OCI-LY7 (cell line): ENCODE measurements at regions of chr1 and their contacts with region 1.

Region 1: GRCh38 chr1:225428068-225428880 is 436 bp upstream of the LBR start:
- DNase-seq: peak; percentile 95
- H3K4me3 ChIP-seq: peak overlapping the region; percentile 85
- H3K27ac ChIP-seq: peak overlapping the region; percentile 92
- H3K4me1 ChIP-seq: peaks cover 33% of the 10 kb centered on the region
- CTCF ChIP-seq: no peak

Region 2: DNA sequence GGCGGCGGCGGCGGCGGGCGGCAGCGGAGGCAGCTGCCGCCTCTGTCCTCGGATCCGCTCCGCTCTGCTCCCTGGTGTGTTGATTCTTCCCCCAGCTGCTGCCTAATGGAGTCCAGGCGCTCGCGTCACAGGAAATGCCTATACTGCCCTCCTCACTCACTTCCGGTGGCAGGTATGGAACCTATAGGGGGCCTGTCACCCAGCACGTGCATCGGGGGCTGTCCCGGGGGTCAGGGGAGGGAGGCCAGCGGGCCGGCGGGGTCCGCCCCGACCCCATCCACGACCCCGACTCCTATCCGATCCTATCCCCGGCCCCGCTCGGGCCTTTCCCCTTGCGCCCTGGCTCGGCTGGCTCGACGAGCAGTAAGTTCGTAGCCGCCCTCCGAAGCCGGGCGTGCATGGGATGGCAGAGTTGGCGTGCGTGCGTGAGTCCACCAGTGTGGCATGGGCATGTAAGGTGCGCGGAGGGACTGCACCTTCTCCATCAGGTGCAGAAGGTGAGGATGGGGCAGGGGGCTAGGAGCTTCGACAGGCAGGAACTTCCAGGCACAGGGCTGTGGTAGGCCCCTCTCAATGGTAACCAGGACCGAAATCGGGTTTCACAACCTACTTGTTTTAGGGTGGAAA is 993.5 kb before region 1 on chr1 and contains the start of gene WDR26:
- CTCF ChIA-PET with region 1: no interaction called
- POLR2A ChIA-PET with region 1: no interaction called
- intact Hi-C with region 1: loop called (anchors 10 kb)
- DNase-seq: peak; percentile 93
- H3K4me3 ChIP-seq: peak within 1 kb of the TSS; percentile 75
- H3K27ac ChIP-seq: peak within 1 kb of the TSS; percentile 44
- H3K4me1 ChIP-seq: peaks cover 51% of the 10 kb centered on the region
- CTCF ChIP-seq: no peak; the same call in 1 of the 2 replicates
- total RNA-seq, gene WDR26: 31.3 and 32.0 TPM in 2 replicates

Region 3: DNA sequence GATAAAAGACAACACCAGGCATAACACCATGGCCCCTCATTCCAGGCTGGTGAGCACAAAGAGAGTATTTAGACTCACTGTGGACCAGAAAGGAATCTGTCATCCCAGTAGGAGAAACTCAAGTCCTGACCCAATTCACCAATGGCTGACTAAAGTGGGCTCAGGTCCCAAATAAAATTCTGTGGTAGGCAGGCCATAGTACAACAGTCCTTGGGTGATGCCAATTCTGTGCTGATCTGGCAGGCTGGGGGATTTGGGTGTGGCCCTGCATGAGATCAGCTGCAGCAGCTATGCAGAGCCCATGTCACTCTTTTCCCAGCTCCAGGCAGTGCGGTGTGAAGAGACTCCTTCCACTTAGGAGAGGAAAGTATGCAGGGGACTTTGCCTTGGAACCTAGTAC is 245.6 kb before region 1 on chr1:
- CTCF ChIA-PET with region 1: no interaction called
- POLR2A ChIA-PET with region 1: no interaction called
- intact Hi-C with region 1: no loop called
- DNase-seq: no peak
- H3K4me3 ChIP-seq: no peak overlapping the region
- H3K27ac ChIP-seq: no peak overlapping the region
- H3K4me1 ChIP-seq: no peaks in the 10 kb centered on the region
- CTCF ChIP-seq: no peak

Region 4: DNA sequence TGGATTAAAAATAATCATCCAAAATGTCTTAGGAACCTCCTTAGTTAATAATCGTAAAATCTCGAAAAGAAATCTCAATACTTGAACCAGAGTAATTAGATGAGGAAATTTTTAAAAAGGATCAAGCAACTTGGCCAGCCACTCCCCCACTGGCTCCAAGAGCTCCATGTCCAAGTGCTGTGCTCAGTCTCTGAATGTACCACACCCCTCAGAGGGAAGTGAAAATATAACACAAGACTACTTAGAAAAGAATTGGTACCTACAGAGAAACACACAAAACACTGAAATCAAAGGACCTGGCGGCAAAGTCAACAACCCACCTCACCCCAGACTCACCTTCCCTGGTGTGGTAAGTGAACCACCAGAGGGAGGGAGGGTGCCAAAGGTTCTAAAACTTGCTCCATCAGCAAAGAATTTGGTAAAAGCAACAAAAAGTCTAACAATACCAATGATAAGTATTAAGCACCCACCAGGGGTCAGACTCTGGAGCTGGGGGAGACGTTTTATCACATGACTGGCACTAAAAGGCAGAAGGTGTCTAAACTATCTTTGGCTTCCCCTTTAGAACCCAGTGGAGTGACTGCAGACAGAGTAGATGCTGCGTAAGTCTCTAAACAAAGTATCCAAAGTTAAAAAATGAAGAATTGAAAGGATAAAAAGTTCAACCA is 14.4 kb before region 1 on chr1:
- CTCF ChIA-PET with region 1: interaction called, 4 read pairs
- POLR2A ChIA-PET with region 1: interaction called, 30 read pairs
- intact Hi-C with region 1: no loop called
- DNase-seq: peak; percentile 18
- H3K4me3 ChIP-seq: no peak overlapping the region
- H3K27ac ChIP-seq: no peak overlapping the region
- H3K4me1 ChIP-seq: no peaks in the 10 kb centered on the region
- CTCF ChIP-seq: peak; percentile 52

Region 5: DNA sequence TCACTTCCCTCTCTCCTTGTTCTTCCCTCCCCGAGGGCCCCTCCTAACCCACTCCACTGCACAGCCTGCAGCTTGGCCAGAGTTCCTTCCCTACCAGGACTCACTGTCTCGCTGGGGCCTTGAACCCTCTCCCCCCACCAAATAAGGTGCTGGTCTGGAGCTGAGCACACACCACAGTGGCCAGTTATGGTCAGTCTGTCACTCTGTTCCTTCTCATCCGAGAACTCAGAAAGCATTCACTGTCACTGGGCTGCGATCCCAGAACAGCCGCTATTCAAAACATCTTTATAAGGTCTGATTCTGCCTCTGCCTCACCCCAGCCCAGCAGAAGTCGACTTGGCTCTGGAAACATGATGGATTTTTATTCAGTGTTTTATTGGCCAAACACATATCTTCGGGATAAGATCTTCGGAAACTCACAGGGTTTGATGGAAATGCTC is 19.4 kb after region 1 on chr1:
- CTCF ChIA-PET with region 1: interaction called, 6 read pairs
- POLR2A ChIA-PET with region 1: interaction called, 242 read pairs
- intact Hi-C with region 1: loop called (anchors 1 kb)
- DNase-seq: no peak
- H3K4me3 ChIP-seq: no peak overlapping the region
- H3K27ac ChIP-seq: no peak overlapping the region
- H3K4me1 ChIP-seq: peaks cover 50% of the 10 kb centered on the region
- CTCF ChIP-seq: no peak

Region 6: GRCh38 chr1:225944951-225945350 is 516.7 kb after region 1 on chr1:
- CTCF ChIA-PET with region 1: no interaction called
- POLR2A ChIA-PET with region 1: no interaction called
- intact Hi-C with region 1: loop called (anchors 5 kb)
- DNase-seq: peak; percentile 85
- H3K4me3 ChIP-seq: peak overlapping the region; percentile 34
- H3K27ac ChIP-seq: peak overlapping the region; percentile 95
- H3K4me1 ChIP-seq: peaks cover 85% of the 10 kb centered on the region
- CTCF ChIP-seq: no peak